ENCODE measurements at regions of chr2 and their contacts with region 1.

Region 1: GRCh38 chr2:134918526-134919340 is at the start of gene CCNT2:
- DNase-seq: peak; percentile 100
- H3K4me3 Mint-ChIP-seq: peak within 1 kb of the TSS; percentile 90
- H3K27ac Mint-ChIP-seq: peak within 1 kb of the TSS; percentile 97
- H3K4me1 Mint-ChIP-seq: peaks cover 35% of the 10 kb centered on the region
- H3K27me3 Mint-ChIP-seq: peaks cover 5% of the 10 kb centered on the region
- total RNA-seq, gene CCNT2: 25.1 to 25.7 TPM

Region 2: GRCh38 chr2:134668821-134669220 is 249.9 kb before region 1 on chr2:
- CTCF ChIA-PET with region 1: no interaction called
- POLR2A ChIA-PET with region 1: no interaction called
- intact Hi-C with region 1: loop called (anchors 5 kb)
- DNase-seq: peak; percentile 95
- H3K4me3 Mint-ChIP-seq: no peak overlapping the region
- H3K27ac Mint-ChIP-seq: peak overlapping the region; percentile 13
- H3K4me1 Mint-ChIP-seq: peaks cover 65% of the 10 kb centered on the region
- H3K27me3 Mint-ChIP-seq: peaks cover 10% of the 10 kb centered on the region

Region 3: DNA sequence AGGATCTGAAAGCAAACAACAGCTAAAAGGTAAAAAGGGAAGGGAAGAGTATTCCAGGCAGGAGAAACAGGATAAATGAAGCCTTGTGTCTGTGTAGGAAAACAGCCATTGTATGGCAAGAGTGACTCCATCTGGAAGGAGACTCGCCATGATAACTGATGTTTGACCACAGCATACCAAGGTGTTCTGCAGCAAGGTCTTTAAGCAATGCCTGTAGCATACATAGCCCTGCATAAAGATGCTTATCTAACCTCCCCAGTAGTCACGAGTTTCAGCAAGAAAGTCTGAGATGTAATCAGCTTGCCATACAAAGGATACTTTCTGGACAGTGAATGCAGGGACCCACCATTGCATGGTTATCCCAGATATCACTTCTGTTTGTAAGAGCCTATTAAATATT is 12.0 kb before region 1 on chr2:
- CTCF ChIA-PET with region 1: no interaction called
- POLR2A ChIA-PET with region 1: no interaction called
- intact Hi-C with region 1: no loop called
- DNase-seq: no peak
- H3K4me3 Mint-ChIP-seq: no peak overlapping the region
- H3K27ac Mint-ChIP-seq: no peak overlapping the region
- H3K4me1 Mint-ChIP-seq: no peaks in the 10 kb centered on the region
- H3K27me3 Mint-ChIP-seq: peaks cover 1% of the 10 kb centered on the region

Region 4: DNA sequence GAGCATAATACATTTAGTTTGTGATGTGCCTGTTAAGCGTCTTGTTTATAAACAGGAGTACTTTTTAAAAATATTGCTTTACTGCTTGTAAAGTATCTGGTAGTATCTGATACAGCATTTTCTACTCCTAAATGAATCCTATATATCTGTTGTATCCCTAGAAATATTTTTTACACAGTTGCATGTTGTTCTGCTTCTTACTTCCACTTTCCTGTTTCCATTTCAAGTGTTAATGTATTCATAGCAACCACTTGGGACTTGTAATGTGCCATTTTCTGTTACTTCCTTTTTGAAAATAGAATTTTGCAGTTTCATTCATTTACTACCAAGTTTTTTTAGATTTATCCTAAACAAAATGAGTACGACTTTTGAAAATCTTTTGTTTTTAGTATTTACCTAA is 24.8 kb after region 1 on chr2:
- CTCF ChIA-PET with region 1: no interaction called
- POLR2A ChIA-PET with region 1: no interaction called
- intact Hi-C with region 1: loop called (anchors 2 kb)
- DNase-seq: no peak
- H3K4me3 Mint-ChIP-seq: no peak overlapping the region
- H3K27ac Mint-ChIP-seq: no peak overlapping the region
- H3K4me1 Mint-ChIP-seq: peaks cover 14% of the 10 kb centered on the region
- H3K27me3 Mint-ChIP-seq: no peaks in the 10 kb centered on the region

Region 5: GRCh38 chr2:135531231-135532228 is 612.8 kb after region 1 on chr2 and contains the start of gene R3HDM1:
- CTCF ChIA-PET with region 1: no interaction called
- POLR2A ChIA-PET with region 1: interaction called, 4 read pairs
- intact Hi-C with region 1: loop called (anchors 1 kb)
- DNase-seq: peak; percentile 97
- H3K4me3 Mint-ChIP-seq: no peak within 1 kb of the TSS
- H3K27ac Mint-ChIP-seq: peak within 1 kb of the TSS; percentile 71
- H3K4me1 Mint-ChIP-seq: peaks cover 29% of the 10 kb centered on the region
- H3K27me3 Mint-ChIP-seq: no peaks in the 10 kb centered on the region
- total RNA-seq, gene R3HDM1: 49.3 to 56.3 TPM

Region 6: GRCh38 chr2:135820003-135820618 is 901.4 kb after region 1 on chr2:
- CTCF ChIA-PET with region 1: no interaction called
- POLR2A ChIA-PET with region 1: no interaction called
- intact Hi-C with region 1: loop called (anchors 1 kb)
- DNase-seq: peak; percentile 94
- H3K4me3 Mint-ChIP-seq: peak overlapping the region; percentile 61
- H3K27ac Mint-ChIP-seq: peak overlapping the region; percentile 78
- H3K4me1 Mint-ChIP-seq: peaks cover 38% of the 10 kb centered on the region
- H3K27me3 Mint-ChIP-seq: no peaks in the 10 kb centered on the region